Activated CD4-positive, alpha-beta memory T cell treated with anti-CD3 and anti-CD28 coated beads for 36 hours (primary cell): ENCODE measurements at regions of chr15 and their contacts with region 1.

Region 1: GRCh38 chr15:67839929-67840748 is at the start of gene RNU6-1:
- DNase-seq: peak; percentile 96
- H3K4me3 Mint-ChIP-seq: peak within 1 kb of the TSS; percentile 88
- H3K27ac Mint-ChIP-seq: peak within 1 kb of the TSS; percentile 95
- H3K4me1 Mint-ChIP-seq: peaks cover 37% of the 10 kb centered on the region
- H3K27me3 Mint-ChIP-seq: peaks cover 18% of the 10 kb centered on the region
- total RNA-seq, gene RNU6-1: not detected

Region 2: DNA sequence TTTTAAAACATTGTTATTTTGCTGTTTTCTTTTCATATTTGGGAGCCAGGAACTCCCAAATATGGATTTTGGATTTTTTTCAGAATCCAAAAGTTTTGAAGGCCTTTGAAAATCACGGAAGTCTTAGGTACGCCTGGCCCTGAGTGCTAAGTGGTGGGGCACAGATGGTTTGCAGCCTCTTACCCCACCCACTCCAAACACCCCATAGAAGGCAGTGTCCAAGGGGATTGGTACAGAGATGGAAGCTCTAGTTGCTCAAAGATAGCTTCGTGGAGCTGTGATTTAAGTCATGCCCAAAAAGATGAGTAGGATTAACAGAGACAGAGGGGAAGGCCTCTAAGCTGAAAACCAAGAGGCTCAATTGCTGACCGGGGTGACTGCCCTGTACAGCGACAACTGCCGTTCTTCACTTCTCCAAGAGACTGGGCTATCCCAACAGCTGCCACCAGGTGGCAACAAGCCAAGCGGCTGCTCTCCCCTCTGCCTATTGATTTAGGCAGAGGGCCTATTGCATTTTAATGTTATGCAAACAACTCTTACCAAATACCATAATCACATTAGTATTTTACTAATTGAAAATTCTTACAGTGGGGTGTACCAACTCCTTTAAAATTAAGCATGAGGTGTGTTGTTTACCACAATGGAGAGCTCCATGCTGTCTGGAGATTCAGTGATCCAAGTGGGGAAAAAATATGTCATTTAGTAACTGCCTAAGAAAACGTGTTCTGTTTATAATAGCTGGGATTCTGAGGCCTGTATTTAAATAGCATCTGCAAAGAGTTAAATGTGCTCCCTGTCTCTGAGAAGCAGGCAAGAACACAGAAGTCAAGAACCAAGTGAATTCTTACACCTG is 383.2 kb before region 1 on chr15:
- CTCF ChIA-PET with region 1: interaction called, 104 read pairs
- POLR2A ChIA-PET with region 1: no interaction called
- intact Hi-C with region 1: loop called (anchors 1 kb)
- DNase-seq: peak; percentile 87
- H3K4me3 Mint-ChIP-seq: no peak overlapping the region
- H3K27ac Mint-ChIP-seq: no peak overlapping the region
- H3K4me1 Mint-ChIP-seq: peaks cover 2% of the 10 kb centered on the region
- H3K27me3 Mint-ChIP-seq: peaks cover 3% of the 10 kb centered on the region

Region 3: GRCh38 chr15:67521029-67521811 is 318.9 kb before region 1 on chr15 and contains the start of gene C15orf61:
- CTCF ChIA-PET with region 1: interaction called, 5 read pairs
- POLR2A ChIA-PET with region 1: interaction called, 5 read pairs
- intact Hi-C with region 1: loop called (anchors 1 kb)
- DNase-seq: peak; percentile 92
- H3K4me3 Mint-ChIP-seq: peak within 1 kb of the TSS; percentile 96
- H3K27ac Mint-ChIP-seq: peak within 1 kb of the TSS; percentile 99
- H3K4me1 Mint-ChIP-seq: peaks cover 23% of the 10 kb centered on the region
- H3K27me3 Mint-ChIP-seq: no peaks in the 10 kb centered on the region
- total RNA-seq, gene C15orf61: 4.1 to 4.3 TPM

Region 4: GRCh38 chr15:67542420-67543347 is 297.5 kb before region 1 on chr15 and contains the start of gene MAP2K5:
- CTCF ChIA-PET with region 1: interaction called, 4 read pairs
- POLR2A ChIA-PET with region 1: no interaction called
- intact Hi-C with region 1: loop called (anchors 5 kb)
- DNase-seq: peak; percentile 86
- H3K4me3 Mint-ChIP-seq: peak within 1 kb of the TSS; percentile 93
- H3K27ac Mint-ChIP-seq: peak within 1 kb of the TSS; percentile 93
- H3K4me1 Mint-ChIP-seq: peaks cover 43% of the 10 kb centered on the region
- H3K27me3 Mint-ChIP-seq: no peaks in the 10 kb centered on the region
- total RNA-seq, gene MAP2K5: 16.5 to 17.4 TPM

Region 5: DNA sequence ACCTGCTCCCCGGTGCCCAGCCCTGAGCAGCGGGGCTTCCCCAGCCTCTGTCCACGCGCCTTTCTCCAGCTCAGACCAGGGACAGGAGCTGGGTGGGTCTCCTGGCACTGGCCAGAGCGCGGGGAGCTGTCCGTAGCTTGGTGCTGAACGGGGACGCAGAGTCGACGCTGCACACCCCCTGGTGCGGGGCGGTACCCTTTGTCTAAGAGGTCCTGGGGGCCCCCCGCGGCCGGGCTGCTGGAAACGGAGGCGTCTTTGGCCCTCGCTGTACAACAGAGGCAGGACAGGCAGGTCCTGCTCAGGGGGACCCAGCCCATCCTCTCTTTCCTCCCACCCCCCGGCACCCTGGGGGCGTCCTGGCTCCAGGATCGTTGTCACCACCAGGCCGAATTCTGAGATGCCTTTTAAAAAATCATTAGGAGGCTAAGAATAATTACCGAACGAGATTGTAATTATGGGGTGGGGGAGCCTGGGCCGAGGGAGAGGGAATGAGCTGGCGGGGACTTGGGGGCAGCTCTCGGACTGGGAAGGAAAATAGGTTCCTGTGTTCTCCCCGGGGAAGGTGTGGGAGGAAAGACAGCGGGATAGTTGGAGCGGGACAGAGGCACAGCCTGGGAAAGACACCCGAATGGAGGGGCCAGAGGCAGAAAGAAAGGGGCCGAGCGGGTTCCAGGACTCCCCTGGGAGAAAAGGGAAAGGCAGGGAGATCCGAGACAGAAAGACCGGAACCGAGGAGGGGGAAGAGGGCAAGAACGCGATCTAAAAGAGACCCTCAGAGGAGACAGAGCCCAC is 19.0 kb before region 1 on chr15:
- CTCF ChIA-PET with region 1: interaction called, 30 read pairs
- POLR2A ChIA-PET with region 1: no interaction called
- intact Hi-C with region 1: no loop called
- DNase-seq: peak; percentile 52
- H3K4me3 Mint-ChIP-seq: no peak overlapping the region
- H3K27ac Mint-ChIP-seq: no peak overlapping the region
- H3K4me1 Mint-ChIP-seq: peaks cover 34% of the 10 kb centered on the region
- H3K27me3 Mint-ChIP-seq: peaks cover 81% of the 10 kb centered on the region

Region 6: GRCh38 chr15:68053701-68054627 is 213.8 kb after region 1 on chr15 and contains the start of gene PIAS1:
- CTCF ChIA-PET with region 1: no interaction called
- POLR2A ChIA-PET with region 1: no interaction called
- intact Hi-C with region 1: loop called (anchors 2 kb)
- DNase-seq: peak; percentile 96
- H3K4me3 Mint-ChIP-seq: peak within 1 kb of the TSS; percentile 98
- H3K27ac Mint-ChIP-seq: peak within 1 kb of the TSS; percentile 92
- H3K4me1 Mint-ChIP-seq: peaks cover 49% of the 10 kb centered on the region
- H3K27me3 Mint-ChIP-seq: peaks cover 7% of the 10 kb centered on the region
- total RNA-seq, gene PIAS1: 29.4 to 30.9 TPM